ENCODE measurements at regions of chr11 and their contacts with region 1.

Region 1: GRCh38 chr11:94504689-94505293 is 7.5 kb upstream of the C11orf97 start:
- H3K4me3 Mint-ChIP-seq: no peak overlapping the region
- H3K27ac Mint-ChIP-seq: no peak overlapping the region
- H3K4me1 Mint-ChIP-seq: no peaks in the 10 kb centered on the region
- H3K27me3 Mint-ChIP-seq: no peaks in the 10 kb centered on the region

Region 2: DNA sequence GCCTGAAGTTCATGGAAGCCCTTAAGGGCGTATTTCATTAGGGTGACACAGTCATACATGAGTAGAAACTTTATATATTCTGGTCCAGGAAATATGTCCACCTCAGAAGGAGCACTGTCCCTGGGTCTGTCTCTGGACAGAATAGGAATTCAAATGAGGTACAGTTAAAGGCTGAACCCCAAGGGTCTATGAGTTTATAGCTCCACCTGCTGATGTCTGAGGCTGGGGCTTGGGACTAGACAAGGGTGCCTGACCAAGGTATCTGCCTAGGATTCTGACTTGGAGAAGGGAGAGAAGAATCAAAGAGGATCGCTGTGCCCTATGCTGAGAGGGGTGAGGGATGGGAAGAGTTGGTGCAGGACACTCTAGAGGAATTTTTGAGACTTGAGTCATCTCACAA is 468.7 kb before region 1 on chr11:
- intact Hi-C with region 1: no loop called
- H3K4me3 Mint-ChIP-seq: no peak overlapping the region
- H3K27ac Mint-ChIP-seq: no peak overlapping the region
- H3K4me1 Mint-ChIP-seq: no peaks in the 10 kb centered on the region
- H3K27me3 Mint-ChIP-seq: no peaks in the 10 kb centered on the region

Region 3: GRCh38 chr11:94183886-94184264 is 320.9 kb before region 1 on chr11:
- intact Hi-C with region 1: loop called (anchors 1 kb)
- H3K4me3 Mint-ChIP-seq: no peak overlapping the region
- H3K27ac Mint-ChIP-seq: no peak overlapping the region
- H3K4me1 Mint-ChIP-seq: peaks cover 5% of the 10 kb centered on the region
- H3K27me3 Mint-ChIP-seq: no peaks in the 10 kb centered on the region

Region 4: GRCh38 chr11:94325681-94326080 is 179.1 kb before region 1 on chr11:
- intact Hi-C with region 1: loop called (anchors 2 kb)
- H3K4me3 Mint-ChIP-seq: no peak overlapping the region
- H3K27ac Mint-ChIP-seq: no peak overlapping the region
- H3K4me1 Mint-ChIP-seq: peaks cover 17% of the 10 kb centered on the region
- H3K27me3 Mint-ChIP-seq: peaks cover 6% of the 10 kb centered on the region

Region 5: GRCh38 chr11:94583866-94584500 is 79.2 kb after region 1 on chr11:
- intact Hi-C with region 1: no loop called
- H3K4me3 Mint-ChIP-seq: peak overlapping the region; percentile 25
- H3K27ac Mint-ChIP-seq: peak overlapping the region; percentile 89
- H3K4me1 Mint-ChIP-seq: peaks cover 45% of the 10 kb centered on the region
- H3K27me3 Mint-ChIP-seq: no peaks in the 10 kb centered on the region